Dendritic cell treated with granulocyte-macrophage colony-stimulating factor and Interleukin-4, amounts not matched to agents 40 ng/mL and 50 ng/mL, for 4 days (primary cell): ENCODE measurements at regions of chr9 and their contacts with region 1.

Region 1: GRCh38 chr9:79623799-79624721 is 52.3 kb downstream of the TLE4 start:
- H3K4me3 Mint-ChIP-seq: peak overlapping the region; percentile 53
- H3K27ac Mint-ChIP-seq: peak overlapping the region; percentile 73
- H3K4me1 Mint-ChIP-seq: peaks cover 48% of the 10 kb centered on the region
- H3K27me3 Mint-ChIP-seq: no peaks in the 10 kb centered on the region

Region 2: DNA sequence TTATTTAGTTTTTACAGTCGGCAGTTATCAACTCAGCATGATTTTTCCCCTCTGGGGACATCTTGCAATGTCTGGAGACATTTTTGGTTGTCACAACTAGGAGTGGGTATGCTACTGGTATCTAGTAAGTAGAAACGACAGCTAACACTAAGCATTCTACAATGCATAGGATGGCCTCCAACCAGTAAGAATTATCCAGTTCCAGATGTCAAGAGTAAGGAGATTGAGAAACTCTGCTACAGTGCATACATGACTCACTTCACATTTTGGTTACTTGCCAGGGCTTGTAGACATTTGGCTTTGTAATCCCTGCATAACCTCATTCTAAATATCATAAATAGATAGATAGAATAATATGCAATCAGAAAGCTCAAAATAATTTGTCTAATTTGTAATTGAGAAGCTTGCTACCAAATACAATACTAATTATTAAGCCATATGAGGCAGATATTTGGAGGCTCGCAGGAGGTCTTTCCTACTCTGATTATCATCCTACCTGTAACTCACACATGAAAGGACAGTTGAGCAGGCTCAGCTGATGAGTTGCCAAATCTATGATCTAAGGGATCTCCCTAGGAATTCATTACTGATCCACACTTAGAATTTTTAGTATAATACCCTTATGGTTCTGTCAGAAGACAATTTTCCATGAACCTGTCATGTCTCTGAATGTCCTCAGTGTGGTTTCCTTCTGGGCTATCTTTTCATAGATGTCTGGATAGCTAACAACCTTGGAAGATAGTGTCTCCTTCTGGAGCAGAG is 399.2 kb before region 1 on chr9:
- intact Hi-C with region 1: no loop called
- H3K4me3 Mint-ChIP-seq: no peak overlapping the region
- H3K27ac Mint-ChIP-seq: no peak overlapping the region
- H3K4me1 Mint-ChIP-seq: no peaks in the 10 kb centered on the region
- H3K27me3 Mint-ChIP-seq: no peaks in the 10 kb centered on the region

Region 3: GRCh38 chr9:79583952-79584654 is 40.0 kb before region 1 on chr9:
- intact Hi-C with region 1: loop called (anchors 5 kb)
- H3K4me3 Mint-ChIP-seq: peak overlapping the region; percentile 34
- H3K27ac Mint-ChIP-seq: peak overlapping the region; percentile 83
- H3K4me1 Mint-ChIP-seq: peaks cover 76% of the 10 kb centered on the region
- H3K27me3 Mint-ChIP-seq: no peaks in the 10 kb centered on the region